Aorta (tissue), 5 donors: ENCODE measurements at regions of chr20 and their contacts with region 1.

Region 1: DNA sequence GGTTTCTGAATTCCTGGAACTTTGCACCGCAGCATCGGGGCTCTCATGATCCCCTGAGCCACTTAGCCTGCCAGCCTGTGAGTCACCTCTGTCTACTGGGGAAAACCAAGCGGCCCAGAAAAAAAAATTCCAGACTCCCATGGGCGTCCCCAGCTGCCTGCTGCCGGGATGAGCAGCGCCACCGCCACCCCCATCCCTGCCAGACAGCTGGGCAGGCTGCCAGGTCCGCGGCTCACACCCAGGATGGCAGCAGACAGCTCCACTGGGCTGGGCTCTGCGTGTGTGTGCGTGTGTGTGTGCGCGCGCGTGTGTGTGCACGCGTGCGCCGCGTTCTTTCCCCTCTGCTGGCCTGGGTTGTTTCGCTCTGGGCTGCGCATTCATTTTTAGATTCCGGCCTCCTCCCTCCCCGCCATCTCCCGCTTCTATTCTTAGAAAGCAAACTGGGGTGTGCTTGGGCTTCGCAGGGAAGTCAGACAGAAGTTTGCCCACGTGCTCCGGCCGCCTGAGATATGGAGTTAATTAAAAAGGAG is 38.9 kb upstream of the PMEPA1 start:
- DNase-seq: peak; percentile 96
- ATAC-seq: peak; percentile 93
- H3K4me3 ChIP-seq: no peak overlapping the region
- H3K27ac ChIP-seq: peak overlapping the region; percentile 93 to 96
- H3K4me1 ChIP-seq: no peaks in the 10 kb centered on the region
- H3K27me3 ChIP-seq: no peaks in the 10 kb centered on the region

Region 2: DNA sequence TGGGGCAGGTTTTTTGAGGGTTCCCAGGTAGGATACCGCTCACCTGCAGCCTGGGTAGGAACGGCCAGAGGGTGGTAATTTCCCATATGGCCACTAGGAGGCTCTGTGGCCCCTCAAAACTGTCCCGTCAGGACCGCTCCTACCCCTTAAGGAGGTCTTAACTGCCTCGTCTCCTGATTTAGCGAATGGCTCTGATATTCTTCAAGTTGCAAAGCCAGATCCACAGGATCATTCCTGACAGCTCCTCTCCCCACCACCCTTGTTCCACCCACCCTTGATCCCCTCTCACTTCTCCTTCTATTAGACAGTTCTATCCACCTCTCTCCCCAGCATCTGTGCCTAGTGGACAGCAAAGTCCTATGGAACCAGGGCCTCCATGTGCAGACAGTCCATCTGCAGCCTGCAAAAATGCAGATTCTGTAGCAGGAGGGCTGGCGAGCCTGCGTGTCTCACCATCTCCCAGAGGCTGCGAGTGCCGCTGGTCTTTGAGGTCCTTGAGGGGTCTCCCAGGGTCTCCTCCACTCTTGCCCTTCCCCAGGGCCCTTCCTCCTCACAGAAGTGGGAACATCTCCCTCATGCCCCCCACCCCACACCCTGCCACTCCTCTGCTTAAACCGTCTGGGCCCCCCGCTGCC is 94.2 kb before region 1 on chr20:
- intact Hi-C with region 1: loop called in 1 of 2 experiments (anchors 5 kb)
- DNase-seq: peak in 1 of 2 donors; percentile 73
- ATAC-seq: peak; percentile 81
- H3K4me3 ChIP-seq: no peak overlapping the region
- H3K27ac ChIP-seq: no peak overlapping the region
- H3K4me1 ChIP-seq: no peaks in the 10 kb centered on the region
- H3K27me3 ChIP-seq: no peaks in the 10 kb centered on the region

Region 3: DNA sequence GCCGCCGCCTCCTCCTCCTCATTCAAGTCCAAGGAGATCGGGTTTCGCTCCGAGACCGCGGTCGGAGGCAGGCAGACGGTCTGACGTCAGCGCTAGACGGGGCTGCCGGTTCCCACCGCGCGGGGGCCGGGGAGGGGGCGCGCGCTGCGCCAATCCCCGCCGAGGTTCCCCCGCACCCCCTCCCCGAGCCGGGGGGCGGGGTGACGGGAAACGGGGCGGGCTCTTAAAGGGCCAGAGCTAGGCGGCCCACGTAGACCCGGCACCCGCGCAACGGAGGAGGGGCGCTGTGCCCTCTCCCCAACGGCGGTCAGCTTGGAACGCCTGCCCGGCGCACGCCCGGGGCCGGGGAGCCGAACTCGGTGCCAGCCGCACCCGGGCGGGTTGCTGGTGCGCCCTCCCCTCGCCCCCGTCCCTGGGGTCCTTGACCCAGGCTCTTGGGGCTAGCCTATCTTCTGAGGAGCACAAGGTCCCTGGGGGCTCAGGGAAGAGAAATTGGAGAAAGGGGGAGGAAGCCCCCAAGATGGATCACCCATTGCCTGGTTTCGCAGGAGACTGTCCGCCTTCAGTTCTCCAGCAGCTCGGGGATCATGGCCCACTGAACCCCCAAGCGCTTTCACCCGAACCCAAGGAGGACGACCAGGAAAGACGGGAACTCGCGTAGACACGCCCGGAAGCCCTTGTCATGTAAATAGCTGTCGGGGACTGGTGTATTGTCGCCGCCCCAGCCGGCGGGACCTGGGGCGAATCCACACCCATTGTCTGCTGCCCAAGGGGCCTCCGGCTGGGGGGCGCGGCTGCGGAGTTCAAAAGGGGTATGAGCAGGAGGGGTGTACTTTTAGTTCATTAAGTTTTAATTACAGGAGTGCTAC is 38.5 kb before region 1 on chr20 and contains the start of gene PMEPA1:
- intact Hi-C with region 1: loop called in 1 of 2 experiments (anchors 2 kb)
- DNase-seq: peak; percentile 97
- ATAC-seq: peak; percentile 92
- H3K4me3 ChIP-seq: peak within 1 kb of the TSS; percentile 91 to 92
- H3K27ac ChIP-seq: peak within 1 kb of the TSS; percentile 81 to 93
- H3K4me1 ChIP-seq: no peaks in the 10 kb centered on the region
- H3K27me3 ChIP-seq: no peaks in the 10 kb centered on the region
- total RNA-seq, gene PMEPA1: 167 to 188 TPM

Region 4: GRCh38 chr20:57718490-57719271 is 30.0 kb before region 1 on chr20:
- intact Hi-C with region 1: loop called (anchors 2 kb)
- DNase-seq: peak; percentile 97 to 98
- ATAC-seq: peak; percentile 93
- H3K4me3 ChIP-seq: no peak overlapping the region
- H3K27ac ChIP-seq: peak overlapping the region in 1 of 2 donors; percentile 35
- H3K4me1 ChIP-seq: peaks cover 0 to 3% of the 10 kb centered on the region in 2 donors
- H3K27me3 ChIP-seq: no peaks in the 10 kb centered on the region

Region 5: GRCh38 chr20:57810511-57811373 is 62.1 kb after region 1 on chr20:
- intact Hi-C with region 1: loop called in 1 of 2 experiments (anchors 10 kb)
- DNase-seq: peak in 1 of 2 donors; percentile 46
- ATAC-seq: no peak
- H3K4me3 ChIP-seq: no peak overlapping the region
- H3K27ac ChIP-seq: no peak overlapping the region
- H3K4me1 ChIP-seq: no peaks in the 10 kb centered on the region
- H3K27me3 ChIP-seq: no peaks in the 10 kb centered on the region

Region 6: GRCh38 chr20:57964011-57964862 is 215.6 kb after region 1 on chr20:
- intact Hi-C with region 1: loop called in 1 of 2 experiments (anchors 5 kb)
- DNase-seq: peak; percentile 64 to 72
- ATAC-seq: peak; percentile 61
- H3K4me3 ChIP-seq: no peak overlapping the region
- H3K27ac ChIP-seq: peak overlapping the region in 1 of 2 donors; percentile 76
- H3K4me1 ChIP-seq: no peaks in the 10 kb centered on the region
- H3K27me3 ChIP-seq: no peaks in the 10 kb centered on the region

Region 7: DNA sequence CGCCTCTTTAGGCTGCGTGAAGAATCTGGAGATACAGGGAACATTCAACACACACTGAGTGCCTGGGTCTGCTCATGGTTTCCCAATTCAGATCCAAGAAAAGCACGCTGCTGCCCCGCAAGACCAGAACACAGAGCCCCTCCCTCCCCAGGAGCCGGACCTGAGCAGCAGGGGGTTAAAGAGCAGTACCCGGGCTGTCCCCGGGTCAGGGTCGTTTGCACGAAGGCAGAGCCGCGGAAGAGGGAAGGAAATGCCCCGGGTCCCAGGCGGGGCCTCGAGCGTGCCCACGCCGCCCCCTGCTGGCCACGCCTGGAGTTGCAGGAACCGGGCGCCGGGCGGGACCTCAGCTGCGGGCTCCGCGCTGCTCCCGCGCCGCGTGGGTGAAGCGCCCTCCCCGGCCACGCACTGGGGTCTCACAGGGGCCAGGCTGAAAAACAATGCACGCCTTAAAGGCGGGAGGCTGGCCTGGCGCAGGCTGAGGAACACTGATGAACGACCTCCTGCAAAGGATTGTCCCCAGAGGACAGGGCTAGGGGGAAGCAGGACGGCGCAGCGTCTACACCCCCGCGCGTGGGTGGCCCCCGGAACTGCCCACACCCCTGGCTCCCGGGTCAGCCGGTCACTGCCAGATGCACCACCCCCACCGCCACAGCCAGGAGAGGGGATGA is 430.9 kb after region 1 on chr20:
- intact Hi-C with region 1: loop called in 1 of 2 experiments (anchors 5 kb)
- DNase-seq: peak; percentile 69 to 89
- ATAC-seq: peak; percentile 89
- H3K4me3 ChIP-seq: peak overlapping the region in 1 of 2 donors; percentile 5
- H3K27ac ChIP-seq: no peak overlapping the region
- H3K4me1 ChIP-seq: no peaks in the 10 kb centered on the region
- H3K27me3 ChIP-seq: no peaks in the 10 kb centered on the region